ENCODE measurements at regions of chr3 and their contacts with region 1.

Region 1: GRCh38 chr3:122074621-122075265 is 19.6 kb downstream of the CD86 start:
- DNase-seq: peak; percentile 57
- H3K4me3 Mint-ChIP-seq: peak overlapping the region; percentile 84
- H3K27ac Mint-ChIP-seq: peak overlapping the region; percentile 97
- H3K4me1 Mint-ChIP-seq: peaks cover 59% of the 10 kb centered on the region
- H3K27me3 Mint-ChIP-seq: no peaks in the 10 kb centered on the region

Region 2: GRCh38 chr3:121834696-121835464 is 239.9 kb before region 1 on chr3 and contains the starts of genes EAF2 and IQCB1:
- intact Hi-C with region 1: loop called (anchors 5 kb)
- DNase-seq: peak; percentile 96
- H3K4me3 Mint-ChIP-seq: peak within 1 kb of the TSS; percentile 98
- H3K27ac Mint-ChIP-seq: peak within 1 kb of the TSS; percentile 97
- H3K4me1 Mint-ChIP-seq: peaks cover 61% of the 10 kb centered on the region
- H3K27me3 Mint-ChIP-seq: no peaks in the 10 kb centered on the region
- total RNA-seq, gene EAF2: 18.5 and 19.2 TPM in 2 replicates
- total RNA-seq, gene IQCB1: 43.4 and 44.0 TPM in 2 replicates

Region 3: DNA sequence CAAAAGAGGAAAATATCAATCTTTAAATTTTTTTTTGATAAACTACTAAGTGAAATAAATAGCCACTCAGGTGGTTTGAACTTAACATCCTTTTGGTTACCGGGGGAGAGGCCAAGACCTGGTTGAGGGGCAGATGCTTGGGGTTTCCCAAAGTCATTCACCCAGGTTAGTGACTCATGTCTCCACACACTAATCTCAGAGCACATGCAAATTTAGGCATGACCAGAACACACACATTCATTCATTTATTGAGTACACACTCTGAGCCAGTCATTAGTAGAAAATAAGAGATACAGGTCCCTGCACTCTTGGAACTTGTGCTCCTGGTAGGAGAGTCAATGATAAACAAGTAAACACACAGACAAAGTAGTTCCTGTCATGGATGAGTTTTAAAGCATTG is 60.0 kb before region 1 on chr3:
- intact Hi-C with region 1: loop called (anchors 2 kb)
- DNase-seq: no peak
- H3K4me3 Mint-ChIP-seq: no peak overlapping the region
- H3K27ac Mint-ChIP-seq: no peak overlapping the region
- H3K4me1 Mint-ChIP-seq: peaks cover 37% of the 10 kb centered on the region
- H3K27me3 Mint-ChIP-seq: peaks cover 2% of the 10 kb centered on the region

Region 4: GRCh38 chr3:122030381-122031122 is 44.2 kb before region 1 on chr3:
- intact Hi-C with region 1: loop called (anchors 2 kb)
- DNase-seq: peak; percentile 19
- H3K4me3 Mint-ChIP-seq: peak overlapping the region; percentile 10
- H3K27ac Mint-ChIP-seq: peak overlapping the region; percentile 86
- H3K4me1 Mint-ChIP-seq: peaks cover 23% of the 10 kb centered on the region
- H3K27me3 Mint-ChIP-seq: no peaks in the 10 kb centered on the region

Region 5: GRCh38 chr3:122084799-122085198 is 10.1 kb after region 1 on chr3:
- intact Hi-C with region 1: loop called (anchors 1 kb)
- DNase-seq: no peak
- H3K4me3 Mint-ChIP-seq: no peak overlapping the region
- H3K27ac Mint-ChIP-seq: peak overlapping the region; percentile 87
- H3K4me1 Mint-ChIP-seq: peaks cover 77% of the 10 kb centered on the region
- H3K27me3 Mint-ChIP-seq: no peaks in the 10 kb centered on the region

Region 6: DNA sequence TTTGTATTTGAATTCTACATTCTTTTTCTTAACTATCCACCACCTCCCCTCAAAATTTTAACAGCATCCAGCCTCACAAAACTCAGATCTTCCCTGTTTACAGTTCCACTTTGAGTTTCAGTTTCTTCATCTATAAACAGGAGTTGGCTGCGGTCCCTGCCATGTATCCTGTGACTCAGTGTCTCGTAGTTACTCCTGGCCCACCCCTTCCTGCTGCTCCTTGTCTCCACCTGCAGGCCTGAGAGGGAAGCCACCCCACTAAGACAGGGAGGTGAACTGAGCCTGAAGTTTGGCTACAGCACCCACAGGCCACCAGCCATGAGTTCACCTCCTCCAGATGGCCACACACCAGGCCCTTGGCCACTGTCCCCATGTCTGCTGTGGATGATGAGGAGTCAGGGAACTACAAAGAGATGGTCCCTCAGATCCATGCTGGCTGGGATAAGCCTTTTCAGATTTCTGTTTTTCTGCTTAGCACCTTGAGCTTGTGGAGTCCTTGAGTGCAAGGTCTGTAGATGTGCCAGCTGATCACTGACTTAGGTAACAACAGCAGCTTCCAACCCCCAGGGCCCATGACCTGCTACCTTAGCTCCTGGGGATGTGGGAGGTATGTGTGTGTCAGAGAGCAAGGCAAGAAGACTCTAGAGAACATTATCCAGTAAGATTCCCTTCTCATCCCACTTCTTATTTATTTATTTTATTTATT is 17.9 kb after region 1 on chr3:
- intact Hi-C with region 1: loop called (anchors 1 kb)
- DNase-seq: peak; percentile 62
- H3K4me3 Mint-ChIP-seq: peak overlapping the region; percentile 3
- H3K27ac Mint-ChIP-seq: peak overlapping the region; percentile 85
- H3K4me1 Mint-ChIP-seq: peaks cover 57% of the 10 kb centered on the region
- H3K27me3 Mint-ChIP-seq: no peaks in the 10 kb centered on the region

Region 7: DNA sequence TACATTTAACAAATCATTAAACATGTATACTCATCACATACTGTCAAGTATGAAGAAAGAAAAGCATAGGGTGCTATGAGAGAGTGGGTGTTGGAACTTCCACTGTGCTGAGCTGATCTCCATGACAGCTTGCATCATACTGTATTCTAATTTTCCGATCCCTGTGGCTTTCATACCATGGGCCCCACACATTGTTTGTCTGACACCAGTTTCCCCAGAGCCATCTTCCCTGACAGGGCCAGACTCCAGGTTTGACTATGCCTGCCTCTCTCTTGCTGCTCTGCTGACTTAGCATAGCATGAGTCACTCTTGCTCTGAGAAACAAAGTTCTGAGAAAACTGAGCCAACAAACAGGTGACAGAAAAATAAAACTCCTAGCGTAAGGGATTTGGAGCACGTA is 71.7 kb after region 1 on chr3:
- intact Hi-C with region 1: loop called (anchors 1 kb)
- DNase-seq: peak; percentile 56
- H3K4me3 Mint-ChIP-seq: no peak overlapping the region
- H3K27ac Mint-ChIP-seq: peak overlapping the region; percentile 46
- H3K4me1 Mint-ChIP-seq: peaks cover 31% of the 10 kb centered on the region
- H3K27me3 Mint-ChIP-seq: no peaks in the 10 kb centered on the region

Region 8: DNA sequence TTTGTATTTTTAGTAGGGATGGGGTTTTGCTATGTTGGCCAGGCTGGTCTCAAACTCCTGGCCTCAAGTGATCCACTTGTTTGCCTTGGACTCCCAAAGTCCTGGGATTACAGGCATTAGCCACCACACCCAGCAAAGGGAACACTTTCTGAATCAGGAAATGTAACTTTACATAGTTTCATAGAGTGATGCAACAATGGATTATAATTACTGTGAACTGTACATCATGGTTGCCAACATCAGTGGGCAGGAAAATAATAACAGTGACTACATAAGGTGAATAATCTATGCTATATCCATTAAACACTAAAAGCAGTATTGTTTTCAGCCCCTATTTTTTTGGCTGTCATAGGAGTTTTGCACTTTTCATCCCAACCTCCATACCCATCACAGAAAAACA is 444.9 kb after region 1 on chr3:
- intact Hi-C with region 1: no loop called
- DNase-seq: no peak
- H3K4me3 Mint-ChIP-seq: no peak overlapping the region
- H3K27ac Mint-ChIP-seq: no peak overlapping the region
- H3K4me1 Mint-ChIP-seq: peaks cover 7% of the 10 kb centered on the region
- H3K27me3 Mint-ChIP-seq: peaks cover 5% of the 10 kb centered on the region

Measured in activated T-helper 2 cell treated with anti-CD3 and anti-CD28 coated beads, Interferon-gamma antibody, Interleukin-2, Interleukin-4, amounts not matched to agents 10 μg/mL and 5 μg/mL and 100 μg/mL, durations not matched to agents 14 hours and 24 hours and 36 hours (primary cell).